ENCODE measurements at regions of chr3 and their contacts with region 1.

Region 1: DNA sequence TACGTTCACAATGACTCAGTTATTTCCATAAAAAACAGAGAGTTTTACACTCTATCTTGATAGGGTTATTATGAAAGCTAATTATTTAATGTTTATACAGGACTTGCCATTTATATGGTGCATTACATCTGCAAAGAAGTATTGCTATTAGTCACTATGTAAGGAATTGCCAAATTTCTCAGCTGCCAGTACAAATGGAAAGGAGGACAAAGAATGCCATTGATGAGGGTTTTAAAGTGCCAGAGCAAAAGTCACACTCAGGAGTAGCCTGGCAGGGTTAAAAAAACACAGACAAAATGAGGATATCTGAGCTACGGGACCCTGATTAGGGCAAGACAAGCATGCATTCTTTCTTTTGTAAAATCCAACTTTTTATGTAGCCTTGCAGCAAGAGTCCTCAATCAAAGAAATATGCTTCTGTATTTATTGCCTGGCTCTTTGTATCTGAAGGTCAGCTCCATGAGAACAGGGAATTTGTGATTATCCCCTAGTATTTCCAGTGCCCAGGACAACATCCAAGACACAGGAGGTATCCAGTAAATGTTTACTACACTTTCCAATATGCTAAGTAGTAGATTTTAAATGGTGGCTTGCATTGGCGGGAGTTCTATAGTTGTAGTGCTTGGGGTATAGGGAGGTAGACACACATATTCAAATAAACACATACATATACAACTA is 1013.6 kb downstream of the ROBO1 start:
- DNase-seq: peak; percentile 82
- ATAC-seq: peak; percentile 91
- H3K4me3 ChIP-seq: no peak overlapping the region
- H3K27ac ChIP-seq: peak overlapping the region; percentile 48
- H3K4me1 ChIP-seq: peaks cover 32% of the 10 kb centered on the region
- H3K27me3 ChIP-seq: no peaks in the 10 kb centered on the region
- CTCF ChIP-seq: no peak

Region 2: DNA sequence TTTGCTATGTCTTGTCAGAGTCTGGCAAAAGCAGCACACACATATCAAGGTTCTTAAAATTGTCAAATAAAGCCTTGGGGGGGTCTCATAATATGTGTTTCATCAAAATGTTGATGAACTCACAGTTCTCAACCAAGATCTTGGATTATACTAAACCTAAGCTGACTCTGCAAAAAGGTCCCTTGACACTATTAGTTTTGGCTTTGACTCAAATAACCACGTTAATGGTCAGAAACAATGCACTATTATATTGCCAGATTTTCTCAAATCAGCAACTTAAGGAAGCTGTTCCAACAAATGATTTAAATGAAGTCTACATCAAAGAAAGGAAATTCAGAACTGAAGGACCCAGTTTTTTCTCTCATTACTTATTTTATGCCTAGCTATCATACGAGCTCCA is 50.3 kb before region 1 on chr3:
- CTCF ChIA-PET with region 1: no interaction called
- POLR2A ChIA-PET with region 1: no interaction called
- intact Hi-C with region 1: loop called (anchors 1 kb)
- DNase-seq: peak; percentile 13
- ATAC-seq: no peak
- H3K4me3 ChIP-seq: no peak overlapping the region
- H3K27ac ChIP-seq: no peak overlapping the region
- H3K4me1 ChIP-seq: peaks cover 16% of the 10 kb centered on the region; the same call in 1 of the 2 replicates
- H3K27me3 ChIP-seq: no peaks in the 10 kb centered on the region
- CTCF ChIP-seq: no peak

Region 3: GRCh38 chr3:78809966-78810365 is 55.8 kb after region 1 on chr3:
- CTCF ChIA-PET with region 1: no interaction called
- POLR2A ChIA-PET with region 1: no interaction called
- intact Hi-C with region 1: loop called (anchors 5 kb)
- DNase-seq: no peak
- ATAC-seq: no peak
- H3K4me3 ChIP-seq: no peak overlapping the region
- H3K27ac ChIP-seq: no peak overlapping the region
- H3K4me1 ChIP-seq: peaks cover 4% of the 10 kb centered on the region; the same call in 1 of the 2 replicates
- H3K27me3 ChIP-seq: no peaks in the 10 kb centered on the region
- CTCF ChIP-seq: no peak

Region 4: DNA sequence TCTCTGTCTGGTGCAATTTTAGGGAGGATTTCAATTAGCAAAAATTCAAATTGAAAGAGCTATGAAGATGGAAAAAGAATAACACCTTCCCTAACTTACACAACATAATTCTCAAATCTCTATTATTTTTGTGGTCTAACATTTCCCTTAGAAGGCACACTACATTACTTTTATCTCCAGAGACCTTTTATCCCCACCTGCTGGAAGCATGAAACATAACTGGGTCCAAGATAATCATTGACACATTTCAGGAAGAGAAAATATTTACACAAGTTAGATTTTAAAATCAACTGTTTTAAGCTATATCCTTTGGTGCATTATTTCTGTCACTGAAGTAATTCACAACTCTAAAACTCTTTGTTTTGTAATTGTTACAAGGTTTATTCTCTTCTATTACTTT is 234.1 kb after region 1 on chr3:
- CTCF ChIA-PET with region 1: no interaction called
- POLR2A ChIA-PET with region 1: no interaction called
- intact Hi-C with region 1: loop called (anchors 5 kb)
- DNase-seq: peak; percentile 51
- ATAC-seq: peak; percentile 66
- H3K4me3 ChIP-seq: no peak overlapping the region
- H3K27ac ChIP-seq: no peak overlapping the region
- H3K4me1 ChIP-seq: peaks cover 24% of the 10 kb centered on the region
- H3K27me3 ChIP-seq: no peaks in the 10 kb centered on the region
- CTCF ChIP-seq: peak; percentile 71